ENCODE measurements at regions of chr21 and their contacts with region 1.

Region 1: GRCh38 chr21:27532076-27532475 is 565.2 kb upstream of the ADAMTS5 start:
- DNase-seq: no peak
- CTCF ChIP-seq: no peak

Region 2: DNA sequence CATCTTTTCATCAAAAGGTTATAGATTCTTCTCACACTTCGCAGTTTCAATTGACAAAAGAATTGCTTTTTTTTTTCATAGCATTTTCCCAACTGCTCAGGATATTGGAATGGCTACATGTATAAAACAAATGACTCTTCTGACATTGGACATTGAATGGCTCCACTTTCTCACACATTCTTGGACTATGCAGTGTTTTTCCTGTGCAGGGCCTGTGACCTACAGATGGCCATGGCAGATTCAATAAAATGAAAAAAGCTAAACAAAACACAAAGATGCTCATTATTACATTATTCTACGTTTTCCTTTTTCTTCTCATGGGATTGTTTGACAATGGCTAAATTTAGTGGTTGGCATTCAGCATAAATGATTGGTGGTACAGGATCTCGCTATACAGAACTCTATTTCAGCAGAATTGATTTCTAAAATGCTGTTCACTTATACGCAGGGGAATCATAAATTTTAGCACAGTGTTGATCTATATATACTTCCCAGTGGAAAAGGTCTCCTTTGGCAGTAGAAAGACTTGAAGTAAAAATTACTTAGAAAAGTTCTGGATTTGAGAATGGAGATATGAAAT is 449.6 kb before region 1 on chr21:
- in situ Hi-C with region 1: no loop called
- DNase-seq: no peak
- CTCF ChIP-seq: no peak

Region 3: GRCh38 chr21:27429710-27430341 is 102.2 kb before region 1 on chr21:
- in situ Hi-C with region 1: loop called (anchors 25 kb)
- DNase-seq: no peak
- CTCF ChIP-seq: no peak